ENCODE measurements at regions of chr2 and their contacts with region 1.

Region 1: GRCh38 chr2:162025121-162026031 is 48.6 kb downstream of the DPP4 start:
- DNase-seq: no peak
- ATAC-seq: no peak
- H3K4me3 ChIP-seq: no peak overlapping the region
- H3K4me3 Mint-ChIP-seq: no peak overlapping the region
- H3K27ac ChIP-seq: no peak overlapping the region
- H3K27ac Mint-ChIP-seq: peak overlapping the region; percentile 9
- H3K4me1 ChIP-seq: peaks cover 12% of the 10 kb centered on the region
- H3K4me1 Mint-ChIP-seq: peaks cover 56% of the 10 kb centered on the region
- H3K27me3 ChIP-seq: no peaks in the 10 kb centered on the region
- H3K27me3 Mint-ChIP-seq: no peaks in the 10 kb centered on the region
- CTCF ChIP-seq: no peak

Region 2: GRCh38 chr2:161844834-161845233 is 180.5 kb before region 1 on chr2:
- CTCF ChIA-PET with region 1: no interaction called
- POLR2A ChIA-PET with region 1: no interaction called
- intact Hi-C with region 1: no loop called
- DNase-seq: no peak
- ATAC-seq: no peak
- H3K4me3 ChIP-seq: no peak overlapping the region
- H3K4me3 Mint-ChIP-seq: no peak overlapping the region
- H3K27ac ChIP-seq: no peak overlapping the region
- H3K27ac Mint-ChIP-seq: no peak overlapping the region
- H3K4me1 ChIP-seq: no peaks in the 10 kb centered on the region
- H3K4me1 Mint-ChIP-seq: no peaks in the 10 kb centered on the region
- H3K27me3 ChIP-seq: no peaks in the 10 kb centered on the region
- H3K27me3 Mint-ChIP-seq: no peaks in the 10 kb centered on the region
- CTCF ChIP-seq: no peak

Region 3: GRCh38 chr2:161965994-161966393 is 59.4 kb before region 1 on chr2:
- CTCF ChIA-PET with region 1: no interaction called
- POLR2A ChIA-PET with region 1: no interaction called
- intact Hi-C with region 1: no loop called
- DNase-seq: no peak
- ATAC-seq: no peak
- H3K4me3 ChIP-seq: no peak overlapping the region
- H3K4me3 Mint-ChIP-seq: no peak overlapping the region
- H3K27ac ChIP-seq: no peak overlapping the region
- H3K27ac Mint-ChIP-seq: no peak overlapping the region
- H3K4me1 ChIP-seq: no peaks in the 10 kb centered on the region
- H3K4me1 Mint-ChIP-seq: peaks cover 4% of the 10 kb centered on the region
- H3K27me3 ChIP-seq: no peaks in the 10 kb centered on the region
- H3K27me3 Mint-ChIP-seq: no peaks in the 10 kb centered on the region
- CTCF ChIP-seq: no peak

Region 4: GRCh38 chr2:162037886-162038285 is 12.5 kb after region 1 on chr2:
- CTCF ChIA-PET with region 1: interaction called, 5 read pairs
- POLR2A ChIA-PET with region 1: interaction called, 4 read pairs
- intact Hi-C with region 1: loop called in 1 of 2 experiments (anchors 2 kb)
- DNase-seq: no peak
- ATAC-seq: no peak
- H3K4me3 ChIP-seq: no peak overlapping the region
- H3K4me3 Mint-ChIP-seq: no peak overlapping the region
- H3K27ac ChIP-seq: no peak overlapping the region
- H3K27ac Mint-ChIP-seq: no peak overlapping the region
- H3K4me1 ChIP-seq: no peaks in the 10 kb centered on the region
- H3K4me1 Mint-ChIP-seq: no peaks in the 10 kb centered on the region
- H3K27me3 ChIP-seq: no peaks in the 10 kb centered on the region
- H3K27me3 Mint-ChIP-seq: no peaks in the 10 kb centered on the region
- CTCF ChIP-seq: no peak

Region 5: GRCh38 chr2:162044586-162044985 is 19.2 kb after region 1 on chr2:
- CTCF ChIA-PET with region 1: no interaction called
- POLR2A ChIA-PET with region 1: no interaction called
- intact Hi-C with region 1: loop called (anchors 2 kb)
- DNase-seq: no peak
- ATAC-seq: no peak
- H3K4me3 ChIP-seq: no peak overlapping the region
- H3K4me3 Mint-ChIP-seq: no peak overlapping the region
- H3K27ac ChIP-seq: no peak overlapping the region
- H3K27ac Mint-ChIP-seq: no peak overlapping the region
- H3K4me1 ChIP-seq: no peaks in the 10 kb centered on the region
- H3K4me1 Mint-ChIP-seq: peaks cover 2% of the 10 kb centered on the region
- H3K27me3 ChIP-seq: no peaks in the 10 kb centered on the region
- H3K27me3 Mint-ChIP-seq: no peaks in the 10 kb centered on the region
- CTCF ChIP-seq: no peak

Region 6: DNA sequence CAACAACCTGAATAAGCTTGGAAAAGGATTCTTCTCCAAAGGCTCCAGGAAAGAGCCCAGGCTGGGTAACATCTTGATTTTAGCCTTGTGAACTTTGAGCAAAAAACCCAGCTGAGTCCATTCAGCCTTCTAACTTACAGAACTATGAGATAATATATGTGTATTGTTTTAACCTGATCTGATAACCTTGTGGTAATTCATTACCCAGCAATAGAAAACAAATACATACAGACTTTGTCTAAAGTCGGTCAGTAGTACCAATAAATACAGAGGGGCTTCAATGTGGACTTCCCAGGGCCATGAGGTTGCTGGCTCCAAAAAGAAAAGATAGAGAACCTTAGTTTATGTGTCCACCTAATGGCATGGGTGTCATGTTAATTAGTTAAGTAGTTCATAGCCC is 621.4 kb after region 1 on chr2:
- CTCF ChIA-PET with region 1: no interaction called
- POLR2A ChIA-PET with region 1: no interaction called
- intact Hi-C with region 1: no loop called
- DNase-seq: no peak
- ATAC-seq: no peak
- H3K4me3 ChIP-seq: no peak overlapping the region
- H3K4me3 Mint-ChIP-seq: no peak overlapping the region
- H3K27ac ChIP-seq: no peak overlapping the region
- H3K27ac Mint-ChIP-seq: no peak overlapping the region
- H3K4me1 ChIP-seq: no peaks in the 10 kb centered on the region
- H3K4me1 Mint-ChIP-seq: no peaks in the 10 kb centered on the region
- H3K27me3 ChIP-seq: no peaks in the 10 kb centered on the region
- H3K27me3 Mint-ChIP-seq: no peaks in the 10 kb centered on the region
- CTCF ChIP-seq: no peak

Measured in CD8-positive, alpha-beta T cell (primary cell).